ENCODE measurements at regions of chr7 and their contacts with region 1.

Region 1: GRCh38 chr7:155380221-155380861 is 77.6 kb upstream of the EN2 start:
- DNase-seq: peak; percentile 95
- H3K4me3 ChIP-seq: no peak overlapping the region
- H3K27ac ChIP-seq: no peak overlapping the region
- H3K4me1 ChIP-seq: peaks cover 3 to 4% of the 10 kb centered on the region in 2 experiments; a peak in 1 of 4 replicates
- H3K27me3 ChIP-seq: peaks cover 100% of the 10 kb centered on the region
- CTCF ChIP-seq: peak; percentile 84
- EP300 ChIP-seq: no peak
- RAD21 ChIP-seq: peak; percentile 70

Region 2: DNA sequence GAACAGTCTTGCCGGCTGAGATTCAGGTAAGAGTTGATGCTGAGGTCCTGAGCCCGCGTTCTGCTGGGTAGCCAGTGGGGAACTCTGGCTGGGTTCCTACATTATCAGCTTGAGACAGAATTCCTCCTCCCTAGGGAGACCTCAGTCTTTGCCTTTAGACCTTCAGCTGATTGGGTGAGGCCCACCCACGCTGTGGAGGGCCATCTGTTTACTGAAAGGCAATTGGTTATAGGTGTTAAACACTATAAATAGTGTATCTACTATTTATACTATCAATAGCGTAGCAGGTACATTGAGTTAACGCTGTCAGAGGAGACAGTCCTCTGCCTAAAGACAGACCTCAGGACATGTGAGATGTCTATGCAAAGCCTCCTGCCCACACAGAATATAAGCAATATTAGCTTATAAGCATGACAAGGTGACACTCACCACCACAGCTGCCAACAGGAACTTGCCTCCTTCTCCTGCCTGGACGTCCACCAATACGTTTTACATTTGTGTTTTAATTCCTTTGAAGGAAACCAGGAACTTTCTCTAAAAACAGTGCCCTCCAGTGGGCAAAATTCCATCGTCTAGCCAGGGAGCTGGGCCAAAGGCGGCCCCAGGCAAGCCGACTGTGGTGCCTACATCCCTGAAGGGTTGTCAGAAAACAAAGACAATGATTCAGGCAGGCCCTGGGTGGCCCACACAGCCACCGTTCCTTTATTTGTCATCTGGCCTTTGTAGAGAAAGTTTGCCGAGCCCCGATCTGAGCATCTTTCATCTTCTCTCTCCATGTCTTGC is 23.8 kb before region 1 on chr7:
- CTCF ChIA-PET with region 1: interaction called, 30 read pairs
- POLR2A ChIA-PET with region 1: no interaction called
- DNase-seq: peak; percentile 67
- H3K4me3 ChIP-seq: no peak overlapping the region; a peak in 1 of 4 replicates
- H3K27ac ChIP-seq: no peak overlapping the region
- H3K4me1 ChIP-seq: peaks cover 0 to 5% of the 10 kb centered on the region in 2 experiments; a peak in 1 of 4 replicates
- H3K27me3 ChIP-seq: peaks cover 49% of the 10 kb centered on the region
- CTCF ChIP-seq: peak; percentile 60
- EP300 ChIP-seq: no peak
- RAD21 ChIP-seq: peak; percentile 34; the same call in 1 of the 2 replicates

Region 3: GRCh38 chr7:155363852-155364562 is 16.3 kb before region 1 on chr7:
- CTCF ChIA-PET with region 1: interaction called, 30 read pairs
- POLR2A ChIA-PET with region 1: no interaction called
- DNase-seq: no peak
- H3K4me3 ChIP-seq: no peak overlapping the region
- H3K27ac ChIP-seq: no peak overlapping the region
- H3K4me1 ChIP-seq: peaks cover 0 to 2% of the 10 kb centered on the region in 2 experiments; a peak in 1 of 4 replicates
- H3K27me3 ChIP-seq: peaks cover 60% of the 10 kb centered on the region
- CTCF ChIP-seq: no peak
- EP300 ChIP-seq: no peak
- RAD21 ChIP-seq: no peak

Region 4: DNA sequence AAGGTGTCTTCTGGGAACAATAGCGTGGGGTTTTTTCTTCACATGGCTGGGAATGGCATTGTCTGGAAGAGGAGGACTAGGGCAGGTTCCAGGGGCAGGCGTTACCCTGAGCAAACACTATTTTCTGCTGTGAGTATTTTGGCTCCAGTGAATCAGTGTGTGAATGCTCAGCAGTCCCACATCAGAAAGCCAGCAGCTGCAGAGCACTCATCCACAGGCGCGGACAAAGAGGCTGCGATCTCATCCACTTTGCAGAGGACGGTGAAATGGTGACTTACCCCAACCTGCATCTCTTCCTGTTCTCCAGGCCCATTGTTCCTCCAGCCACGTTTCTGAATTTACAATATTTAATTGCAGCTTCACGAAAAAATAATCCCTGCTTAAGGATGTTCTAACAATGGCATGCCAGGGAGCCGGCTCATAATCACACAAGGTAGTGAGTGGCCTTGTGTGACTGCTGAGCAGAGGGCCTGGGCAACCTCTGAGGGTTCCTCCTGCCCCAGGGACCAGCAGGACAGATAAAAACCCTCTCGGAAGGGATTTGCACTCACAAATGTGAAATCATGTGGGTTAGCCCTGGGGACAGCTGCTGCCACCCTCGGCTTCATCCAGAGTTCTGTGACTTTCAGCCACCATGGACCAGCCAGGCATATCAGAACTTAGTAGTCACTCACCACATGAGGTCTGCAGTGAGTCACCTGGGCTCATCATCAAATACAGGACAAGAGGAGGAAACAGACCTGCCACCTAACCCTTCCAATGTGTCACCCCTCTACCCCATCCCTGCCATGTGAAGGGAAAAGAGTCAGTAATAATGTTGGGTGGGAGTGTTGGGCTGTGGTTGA is 12.6 kb after region 1 on chr7:
- CTCF ChIA-PET with region 1: interaction called, 29 read pairs
- POLR2A ChIA-PET with region 1: interaction called, 3 read pairs
- DNase-seq: no peak
- H3K4me3 ChIP-seq: no peak overlapping the region
- H3K27ac ChIP-seq: no peak overlapping the region
- H3K4me1 ChIP-seq: peaks cover 0 to 7% of the 10 kb centered on the region in 2 experiments; a peak in 1 of 4 replicates
- H3K27me3 ChIP-seq: peaks cover 95% of the 10 kb centered on the region
- CTCF ChIP-seq: no peak
- EP300 ChIP-seq: no peak
- RAD21 ChIP-seq: no peak

Region 5: GRCh38 chr7:155660059-155660757 is 279.9 kb after region 1 on chr7:
- CTCF ChIA-PET with region 1: no interaction called
- POLR2A ChIA-PET with region 1: no interaction called
- DNase-seq: no peak
- H3K4me3 ChIP-seq: no peak overlapping the region
- H3K27ac ChIP-seq: no peak overlapping the region
- H3K4me1 ChIP-seq: peaks cover 3% of the 10 kb centered on the region in 2 experiments; a peak in 3 of 4 replicates
- H3K27me3 ChIP-seq: no peaks in the 10 kb centered on the region
- CTCF ChIP-seq: no peak
- EP300 ChIP-seq: no peak
- RAD21 ChIP-seq: no peak

Measured in SK-N-SH (cell line).